BJ (cell line): ENCODE measurements at regions of chr20 and their contacts with region 1.

Region 1: GRCh38 chr20:63791497-63792156 is 39.4 kb downstream of the ZBTB46 start:
- DNase-seq: no peak
- H3K4me3 ChIP-seq: no peak overlapping the region
- H3K27me3 ChIP-seq: no peaks in the 10 kb centered on the region
- CTCF ChIP-seq: no peak

Region 2: GRCh38 chr20:63529861-63530788 is 261.5 kb before region 1 on chr20:
- CTCF ChIA-PET with region 1: no interaction called
- POLR2A ChIA-PET with region 1: no interaction called
- DNase-seq: no peak
- H3K4me3 ChIP-seq: no peak overlapping the region
- H3K27me3 ChIP-seq: peaks cover 2% of the 10 kb centered on the region; the same call in 1 of the 2 replicates
- CTCF ChIP-seq: no peak

Region 3: GRCh38 chr20:63775096-63775978 is 16.3 kb before region 1 on chr20:
- CTCF ChIA-PET with region 1: interaction called, 71 read pairs
- POLR2A ChIA-PET with region 1: no interaction called
- DNase-seq: no peak
- H3K4me3 ChIP-seq: peak overlapping the region; percentile 28
- H3K27me3 ChIP-seq: no peaks in the 10 kb centered on the region
- CTCF ChIP-seq: peak; percentile 87